ENCODE measurements at regions of chr3 and their contacts with region 1.

Region 1: GRCh38 chr3:158058495-158059130 is 47.6 kb downstream of the SHOX2 start:
- DNase-seq: peak in 1 of 4 experiments; percentile 20
- ATAC-seq: no peak
- H3K4me3 ChIP-seq: no peak overlapping the region
- H3K27ac ChIP-seq: no peak overlapping the region
- H3K4me1 ChIP-seq: peaks cover 0 to 2% of the 10 kb centered on the region in 2 experiments; a peak in 1 of 5 replicates
- H3K27me3 ChIP-seq: no peaks in the 10 kb centered on the region
- CTCF ChIP-seq: no peak
- EP300 ChIP-seq: no peak
- POLR2A ChIP-seq: no peak
- RAD21 ChIP-seq: no peak

Region 2: DNA sequence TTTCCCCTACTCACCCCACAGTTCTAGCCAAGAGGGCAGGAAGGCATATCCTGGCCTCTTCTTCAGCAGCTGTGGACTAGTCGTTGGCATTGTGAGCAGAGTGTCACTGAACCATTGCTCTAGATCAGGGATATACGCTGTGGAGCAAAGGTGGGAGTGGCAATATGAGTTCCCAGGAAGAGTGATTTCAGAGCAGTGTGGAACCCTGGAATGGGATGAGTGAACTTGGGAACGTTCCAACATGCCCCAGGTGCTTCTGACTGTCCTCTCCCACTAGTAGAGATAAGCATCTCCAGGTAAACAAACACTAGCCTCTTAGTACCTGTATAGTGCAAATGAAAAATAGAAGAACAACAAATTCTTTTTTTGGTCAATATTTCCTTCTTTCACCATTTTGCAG is 431.8 kb before region 1 on chr3:
- CTCF ChIA-PET with region 1: no interaction called
- POLR2A ChIA-PET with region 1: no interaction called
- in situ Hi-C with region 1: no loop called
- intact Hi-C with region 1: loop called (anchors 10 kb)
- DNase-seq: no peak
- ATAC-seq: no peak
- H3K4me3 ChIP-seq: no peak overlapping the region
- H3K27ac ChIP-seq: no peak overlapping the region
- H3K4me1 ChIP-seq: no peaks in the 10 kb centered on the region
- H3K27me3 ChIP-seq: peaks cover 3 to 4% of the 10 kb centered on the region in 2 experiments; a peak in 1 of 5 replicates
- CTCF ChIP-seq: no peak
- EP300 ChIP-seq: no peak
- POLR2A ChIP-seq: no peak
- RAD21 ChIP-seq: no peak

Region 3: GRCh38 chr3:157700408-157700807 is 358.2 kb before region 1 on chr3:
- CTCF ChIA-PET with region 1: no interaction called
- POLR2A ChIA-PET with region 1: no interaction called
- in situ Hi-C with region 1: no loop called
- intact Hi-C with region 1: no loop called
- DNase-seq: peak in 1 of 4 experiments; percentile 4
- ATAC-seq: no peak
- H3K4me3 ChIP-seq: no peak overlapping the region
- H3K27ac ChIP-seq: no peak overlapping the region
- H3K4me1 ChIP-seq: no peaks in the 10 kb centered on the region
- H3K27me3 ChIP-seq: no peaks in the 10 kb centered on the region; a peak in 1 of 5 replicates
- CTCF ChIP-seq: peak in 2 of 3 experiments; percentile 19 to 26; a peak in 1 of 6 replicates
- EP300 ChIP-seq: no peak
- POLR2A ChIP-seq: no peak
- RAD21 ChIP-seq: peak in 1 of 2 experiments; percentile 37; a peak in 2 of 4 replicates